Posterior vena cava (tissue), 2 donors: ENCODE measurements at regions of chr4 and their contacts with region 1.

Region 1: GRCh38 chr4:118124997-118125396 is 90.7 kb downstream of the NDST3 start:
- DNase-seq: no peak

Region 2: DNA sequence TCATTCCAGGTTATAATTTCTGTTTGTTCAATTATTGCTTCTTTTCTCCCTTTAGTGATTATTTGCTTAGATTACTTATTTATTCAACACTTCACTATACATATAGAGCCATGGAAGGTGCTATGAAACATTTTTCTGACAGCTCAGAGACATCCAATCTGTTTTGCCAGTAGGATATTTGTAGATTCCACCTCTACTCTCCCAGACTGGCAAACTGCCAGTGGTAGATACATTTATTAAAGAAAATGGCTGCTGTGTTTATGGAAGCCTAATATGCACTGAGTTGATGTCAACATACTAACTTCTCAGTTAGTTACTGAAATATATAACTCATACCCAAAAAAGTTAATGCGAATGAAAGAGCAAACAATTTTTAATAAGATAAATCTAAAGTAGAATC is 1388.2 kb before region 1 on chr4:
- intact Hi-C with region 1: loop called in 1 of 2 experiments (anchors 5 kb)
- DNase-seq: no peak

Region 3: DNA sequence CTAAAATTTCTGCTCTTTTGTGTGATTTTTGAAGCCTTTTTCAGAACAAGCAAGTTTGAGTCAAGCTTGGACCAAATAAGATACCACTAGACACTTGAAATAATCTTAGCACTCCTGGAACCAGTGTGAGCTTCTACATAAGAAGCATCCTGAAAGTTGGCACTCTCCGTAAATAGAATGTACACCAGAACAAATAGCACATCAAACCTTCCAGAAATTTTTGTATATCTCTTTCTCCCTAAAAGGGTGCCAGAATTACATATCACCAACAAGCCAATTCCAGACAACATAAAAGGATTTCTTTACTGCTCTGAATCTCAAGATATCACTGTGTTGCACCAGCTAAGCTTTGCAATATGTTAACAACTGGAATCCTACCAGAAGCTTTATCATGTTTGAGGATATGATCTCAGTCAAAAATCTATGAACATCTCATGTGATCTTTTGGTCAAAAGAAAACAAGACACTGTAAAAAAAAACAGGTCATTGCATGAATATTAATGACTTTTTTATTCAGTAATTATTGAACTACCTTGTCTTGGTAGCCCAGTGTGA is 110.6 kb after region 1 on chr4:
- intact Hi-C with region 1: no loop called
- DNase-seq: no peak

Region 4: GRCh38 chr4:119189638-119190037 is 1064.6 kb after region 1 on chr4:
- intact Hi-C with region 1: no loop called
- DNase-seq: no peak

Region 5: GRCh38 chr4:119683518-119683917 is 1558.5 kb after region 1 on chr4:
- intact Hi-C with region 1: no loop called
- DNase-seq: no peak